ENCODE measurements at regions of chr4 and their contacts with region 1.

Region 1: GRCh38 chr4:104394406-104395167 is 100.1 kb downstream of the CXXC4 start:
- DNase-seq: peak; percentile 23 to 74 (median 54)
- H3K4me3 ChIP-seq: peak overlapping the region; percentile 17 to 69 (median 52)
- H3K27ac ChIP-seq: peak overlapping the region in 57 of 59 donors; percentile 1 to 90 (median 74)
- H3K27me3 ChIP-seq: peaks cover 0 to 3% (median 0%) of the 10 kb centered on the region in 45 donors
- CTCF ChIP-seq: peak in 55 of 56 donors; percentile 21 to 79 (median 56)

Region 2: GRCh38 chr4:104015680-104016253 is 378.8 kb before region 1 on chr4:
- intact Hi-C with region 1: loop called (anchors 1 to 5 kb)
- DNase-seq: peak in 1 of 10 donors; percentile 49
- H3K4me3 ChIP-seq: no peak overlapping the region
- H3K27ac ChIP-seq: no peak overlapping the region
- H3K27me3 ChIP-seq: no peaks in the 10 kb centered on the region
- CTCF ChIP-seq: peak; percentile 21 to 84 (median 66)

Region 3: GRCh38 chr4:104064646-104065577 is 329.7 kb before region 1 on chr4:
- intact Hi-C with region 1: loop called (anchors 1 to 2 kb)
- DNase-seq: peak; percentile 11 to 81 (median 64)
- H3K4me3 ChIP-seq: peak overlapping the region in 38 of 59 donors; percentile 1 to 48 (median 19)
- H3K27ac ChIP-seq: peak overlapping the region in 17 of 59 donors; percentile 10 to 66 (median 29)
- H3K27me3 ChIP-seq: no peaks in the 10 kb centered on the region
- CTCF ChIP-seq: peak; percentile 62 to 94 (median 80)

Region 4: DNA sequence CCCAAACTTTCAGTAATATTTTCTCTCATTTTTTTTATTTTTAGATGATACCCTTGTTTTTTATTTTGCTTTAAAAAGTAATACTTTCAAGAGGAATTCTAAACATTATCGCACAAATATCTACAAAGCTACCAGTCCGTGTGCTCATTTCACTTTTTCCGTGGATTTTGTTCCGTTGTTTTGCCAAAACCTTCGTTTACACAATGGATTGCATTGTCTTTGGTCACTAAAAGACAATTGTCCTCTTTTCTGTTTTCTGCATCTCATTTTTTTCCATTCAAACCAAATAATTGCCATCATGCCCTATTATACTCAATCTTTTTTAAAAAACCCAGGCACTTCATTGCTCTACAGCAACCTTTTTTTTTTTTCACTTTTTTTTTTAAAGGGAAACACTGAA is 114.8 kb before region 1 on chr4:
- intact Hi-C with region 1: loop called in 1 of 2 experiments (anchors 5 kb)
- DNase-seq: no peak
- H3K4me3 ChIP-seq: peak overlapping the region in 24 of 59 donors; percentile 1 to 50 (median 30)
- H3K27ac ChIP-seq: peak overlapping the region; percentile 33 to 98 (median 93)
- H3K27me3 ChIP-seq: no peaks in the 10 kb centered on the region
- CTCF ChIP-seq: peak in 6 of 56 donors; percentile 7 to 33 (median 18)

Region 5: DNA sequence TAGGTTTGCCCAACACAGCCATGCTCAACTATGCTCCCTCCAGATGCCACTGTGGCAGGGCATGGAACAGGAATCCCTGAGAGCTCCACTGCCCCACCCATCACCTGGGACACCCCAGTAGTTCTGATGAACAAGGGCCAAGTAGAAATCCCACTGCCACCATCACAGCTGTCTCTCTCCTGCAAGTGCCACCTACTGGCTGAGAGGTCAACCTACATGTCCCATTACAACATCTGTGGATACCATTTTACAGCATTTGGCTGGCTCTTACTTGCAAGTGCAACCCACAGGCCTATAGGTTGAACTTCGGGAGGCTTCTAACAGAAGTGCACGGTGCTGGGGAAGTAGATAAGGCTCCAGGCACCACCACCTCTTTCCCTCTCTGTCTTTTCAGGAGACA is 42.4 kb before region 1 on chr4:
- intact Hi-C with region 1: no loop called
- DNase-seq: no peak
- H3K4me3 ChIP-seq: no peak overlapping the region
- H3K27ac ChIP-seq: no peak overlapping the region
- H3K27me3 ChIP-seq: no peaks in the 10 kb centered on the region
- CTCF ChIP-seq: no peak

Region 6: DNA sequence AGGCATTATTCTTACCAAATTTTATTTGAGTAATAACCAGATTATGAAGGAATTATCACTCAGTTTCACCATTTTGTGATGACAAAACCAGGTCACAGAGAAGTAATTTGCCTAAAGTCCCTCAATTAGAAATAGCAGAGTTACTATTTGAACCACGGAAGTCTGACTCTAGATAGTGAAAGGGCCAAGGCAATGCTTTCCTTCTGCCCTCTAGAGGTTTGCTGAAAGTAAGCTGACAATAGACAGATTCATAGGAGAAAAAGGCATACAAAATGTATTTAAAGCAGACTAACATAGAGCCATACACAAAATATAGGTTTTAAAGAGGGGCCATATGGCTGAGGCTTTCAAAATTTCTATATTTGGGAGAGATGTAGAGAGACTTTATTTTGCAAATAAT is 57.0 kb after region 1 on chr4:
- intact Hi-C with region 1: loop called in 1 of 2 experiments (anchors 2 kb)
- DNase-seq: no peak
- H3K4me3 ChIP-seq: peak overlapping the region in 13 of 59 donors; percentile 4 to 39 (median 19)
- H3K27ac ChIP-seq: peak overlapping the region in 8 of 59 donors; percentile 2 to 44 (median 20)
- H3K27me3 ChIP-seq: no peaks in the 10 kb centered on the region
- CTCF ChIP-seq: peak in 55 of 56 donors; percentile 21 to 77 (median 57)

Region 7: DNA sequence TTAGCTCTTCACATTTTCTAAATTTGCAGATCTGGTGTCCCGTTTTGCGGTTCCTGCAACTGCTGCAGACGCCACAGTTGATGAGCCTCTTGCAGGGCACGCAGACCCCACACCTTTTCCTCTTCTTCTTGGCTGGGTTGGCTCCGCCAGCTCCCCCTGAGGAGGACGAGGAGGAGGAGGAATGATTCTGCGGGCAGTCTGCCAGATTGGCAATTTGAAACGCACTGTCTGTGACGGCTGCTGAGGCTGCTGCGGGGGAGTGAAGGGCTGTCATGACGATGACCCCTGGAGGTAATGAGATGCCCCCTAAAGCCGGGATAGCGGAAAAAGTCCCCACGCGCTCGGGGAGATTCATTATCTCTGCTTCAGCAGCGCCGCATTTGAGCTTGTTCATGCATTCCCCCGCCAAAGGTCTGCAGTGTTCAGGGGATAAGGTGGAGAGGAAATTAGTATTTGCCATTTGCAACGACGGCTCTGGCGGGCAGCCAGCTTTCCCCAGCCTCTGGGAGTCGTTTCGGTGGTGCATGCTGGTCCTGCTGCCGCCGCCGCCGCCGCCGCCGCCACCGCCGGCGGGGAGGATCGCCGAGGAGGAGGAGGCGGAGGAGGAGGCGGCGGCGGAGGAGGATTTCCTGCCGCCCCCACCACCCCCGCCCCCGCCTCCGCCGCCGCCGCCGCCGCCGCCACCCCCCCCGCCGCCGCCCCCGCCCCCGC is 96.3 kb after region 1 on chr4:
- intact Hi-C with region 1: loop called in 1 of 2 experiments (anchors 2 kb)
- DNase-seq: peak; percentile 59 to 76 (median 68)
- H3K4me3 ChIP-seq: peak overlapping the region; percentile 53 to 86 (median 72)
- H3K27ac ChIP-seq: peak overlapping the region; percentile 35 to 97 (median 93)
- H3K27me3 ChIP-seq: peaks cover 0 to 8% (median 0%) of the 10 kb centered on the region in 45 donors
- CTCF ChIP-seq: peak in 2 of 56 donors; percentile 1 to 6

Measured in dorsolateral prefrontal cortex (tissue), 120 donors.